ENCODE measurements at regions of chr7 and their contacts with region 1.

Region 1: DNA sequence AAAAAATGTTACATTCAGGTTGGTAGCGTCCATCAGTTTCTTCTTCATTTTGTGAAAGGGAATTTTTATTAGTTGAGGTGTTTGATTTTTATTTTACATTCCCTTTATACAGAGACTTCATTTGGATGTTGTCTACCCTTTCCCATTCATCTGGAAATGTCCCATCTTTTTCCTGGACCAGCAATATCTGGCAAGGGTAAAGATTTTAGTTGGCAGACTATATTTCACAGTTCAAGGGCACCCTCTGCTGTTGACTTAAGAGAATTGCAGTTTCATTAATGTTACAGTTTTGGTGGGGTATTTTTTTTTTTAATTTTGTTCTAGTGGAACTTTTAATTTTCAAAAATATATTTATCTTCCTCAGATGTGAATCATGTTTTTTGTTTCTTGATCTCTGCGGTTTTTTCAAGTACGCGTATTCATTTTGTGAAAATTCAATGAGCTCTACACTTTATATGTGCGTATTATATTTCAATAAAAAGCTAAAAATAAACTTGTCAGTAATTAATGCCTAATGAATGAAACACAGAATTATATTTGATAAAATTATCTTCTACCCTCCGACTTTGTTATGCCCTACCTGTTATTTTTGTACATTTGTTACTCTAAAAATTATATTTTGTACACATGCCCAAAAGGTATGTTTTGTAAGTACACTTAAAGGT is 97.9 kb upstream of the KLF14 start:
- DNase-seq: no peak
- H3K4me3 ChIP-seq: no peak overlapping the region
- H3K27ac ChIP-seq: no peak overlapping the region
- H3K4me1 ChIP-seq: peaks cover 3% of the 10 kb centered on the region
- H3K27me3 ChIP-seq: no peaks in the 10 kb centered on the region
- CTCF ChIP-seq: peak; percentile 61 to 73

Region 2: GRCh38 chr7:130063036-130063435 is 768.9 kb before region 1 on chr7:
- CTCF ChIA-PET with region 1: no interaction called
- dilution Hi-C with region 1: no loop called
- in situ Hi-C with region 1: no loop called
- intact Hi-C with region 1: loop called (anchors 2 kb)
- DNase-seq: no peak
- H3K4me3 ChIP-seq: no peak overlapping the region
- H3K27ac ChIP-seq: no peak overlapping the region
- H3K4me1 ChIP-seq: no peaks in the 10 kb centered on the region
- H3K27me3 ChIP-seq: no peaks in the 10 kb centered on the region
- CTCF ChIP-seq: peak; percentile 77 to 83

Region 3: DNA sequence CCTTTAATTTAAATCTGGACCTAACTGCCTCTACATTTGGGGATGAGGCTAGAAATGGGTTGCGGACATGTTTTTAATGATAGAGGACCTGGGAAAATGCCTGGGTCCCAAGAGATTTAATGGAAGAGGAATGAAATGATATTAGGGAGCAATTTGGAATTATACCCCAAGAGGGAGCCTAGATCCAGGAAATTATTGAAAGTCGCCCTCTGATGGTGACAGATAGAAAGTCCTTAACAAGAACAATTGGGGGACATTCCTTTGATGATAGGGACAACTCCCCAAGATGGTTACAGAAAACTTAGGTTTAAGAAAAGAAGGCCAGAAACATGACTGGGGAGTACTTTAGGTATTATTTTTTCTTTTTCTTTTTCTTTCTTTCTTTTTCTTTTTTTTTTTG is 136.1 kb before region 1 on chr7:
- CTCF ChIA-PET with region 1: no interaction called
- dilution Hi-C with region 1: no loop called
- in situ Hi-C with region 1: no loop called
- intact Hi-C with region 1: loop called (anchors 1 kb)
- DNase-seq: peak; percentile 6
- H3K4me3 ChIP-seq: no peak overlapping the region
- H3K27ac ChIP-seq: no peak overlapping the region
- H3K4me1 ChIP-seq: no peaks in the 10 kb centered on the region
- H3K27me3 ChIP-seq: no peaks in the 10 kb centered on the region
- CTCF ChIP-seq: peak; percentile 49 to 74

Region 4: DNA sequence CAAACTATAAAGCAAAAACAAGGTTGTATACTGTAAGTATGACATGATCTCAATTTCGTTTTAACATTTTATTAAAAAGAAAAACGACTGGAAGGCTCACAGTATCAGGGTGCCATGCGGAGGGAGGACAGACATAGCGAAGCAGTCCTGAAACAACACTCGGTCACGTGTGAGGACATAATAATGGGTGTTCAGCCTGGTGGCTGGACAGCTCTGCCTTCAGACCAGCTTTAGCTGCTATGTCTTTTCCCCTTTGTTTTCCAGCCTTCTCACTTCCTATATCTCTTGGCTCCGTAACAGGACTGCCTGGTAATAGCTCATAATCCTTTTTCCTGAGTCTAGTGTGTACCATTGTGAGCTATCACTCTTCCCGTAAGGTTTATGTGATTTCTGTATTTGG is 79.5 kb before region 1 on chr7:
- CTCF ChIA-PET with region 1: no interaction called
- dilution Hi-C with region 1: no loop called
- in situ Hi-C with region 1: no loop called
- intact Hi-C with region 1: no loop called
- DNase-seq: no peak
- H3K4me3 ChIP-seq: no peak overlapping the region
- H3K27ac ChIP-seq: no peak overlapping the region
- H3K4me1 ChIP-seq: no peaks in the 10 kb centered on the region
- H3K27me3 ChIP-seq: peaks cover 7% of the 10 kb centered on the region
- CTCF ChIP-seq: no peak

Region 5: GRCh38 chr7:130793855-130794618 is 37.9 kb before region 1 on chr7:
- CTCF ChIA-PET with region 1: no interaction called
- dilution Hi-C with region 1: no loop called
- in situ Hi-C with region 1: no loop called
- intact Hi-C with region 1: loop called (anchors 1 kb)
- DNase-seq: peak; percentile 48
- H3K4me3 ChIP-seq: peak overlapping the region; percentile 3 to 42 (median 41)
- H3K27ac ChIP-seq: peak overlapping the region; percentile 36
- H3K4me1 ChIP-seq: peaks cover 4% of the 10 kb centered on the region
- H3K27me3 ChIP-seq: no peaks in the 10 kb centered on the region
- CTCF ChIP-seq: peak in 1 of 2 donors; percentile 42

Region 6: DNA sequence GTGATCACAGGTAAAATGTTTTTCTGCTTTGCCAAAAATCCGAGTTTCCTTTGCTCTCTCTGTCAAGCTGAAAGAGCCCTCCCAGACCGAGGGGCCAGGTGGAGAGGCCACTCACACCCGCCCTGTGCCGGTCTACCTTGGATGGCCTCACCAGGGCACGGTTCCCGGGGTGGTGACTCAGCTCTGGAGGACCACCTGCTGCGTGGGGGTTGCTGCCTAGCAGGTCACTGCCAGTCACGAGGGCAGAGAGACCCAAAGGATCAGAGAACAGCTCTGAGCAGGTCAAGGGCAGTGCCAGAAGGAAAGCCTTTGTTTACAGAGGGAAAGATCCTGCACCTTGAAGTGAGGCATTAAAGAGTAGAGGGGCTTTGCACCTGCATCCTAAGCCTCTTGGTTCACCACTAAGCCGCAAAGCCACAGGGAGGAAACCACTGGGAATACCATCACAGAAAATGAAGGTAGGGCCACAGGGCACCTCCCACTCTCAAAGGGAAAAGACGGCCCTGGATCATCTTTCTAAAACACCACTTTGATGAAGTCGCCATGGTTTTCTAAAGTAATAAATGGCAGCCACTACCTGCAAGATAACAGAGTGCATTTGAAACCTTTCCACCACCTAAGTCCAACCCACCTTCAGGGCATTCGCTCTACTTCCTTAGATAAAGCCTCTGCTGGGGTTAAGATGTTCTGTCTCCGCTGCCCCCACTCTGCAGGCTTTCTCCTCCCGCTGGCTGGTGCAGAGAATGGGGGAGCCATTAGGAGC is 62.4 kb after region 1 on chr7:
- CTCF ChIA-PET with region 1: no interaction called
- dilution Hi-C with region 1: no loop called
- in situ Hi-C with region 1: no loop called
- intact Hi-C with region 1: no loop called
- DNase-seq: peak; percentile 79
- H3K4me3 ChIP-seq: no peak overlapping the region
- H3K27ac ChIP-seq: peak overlapping the region; percentile 49
- H3K4me1 ChIP-seq: peaks cover 76% of the 10 kb centered on the region
- H3K27me3 ChIP-seq: no peaks in the 10 kb centered on the region
- CTCF ChIP-seq: no peak

Region 7: GRCh38 chr7:130966246-130967009 is 134.5 kb after region 1 on chr7:
- CTCF ChIA-PET with region 1: no interaction called
- dilution Hi-C with region 1: no loop called
- in situ Hi-C with region 1: no loop called
- intact Hi-C with region 1: no loop called
- DNase-seq: no peak
- H3K4me3 ChIP-seq: no peak overlapping the region
- H3K27ac ChIP-seq: no peak overlapping the region
- H3K4me1 ChIP-seq: peaks cover 11% of the 10 kb centered on the region
- H3K27me3 ChIP-seq: no peaks in the 10 kb centered on the region
- CTCF ChIP-seq: no peak